Ovary (tissue), 10 donors: ENCODE measurements at regions of chr1 and their contacts with region 1.

Region 1: DNA sequence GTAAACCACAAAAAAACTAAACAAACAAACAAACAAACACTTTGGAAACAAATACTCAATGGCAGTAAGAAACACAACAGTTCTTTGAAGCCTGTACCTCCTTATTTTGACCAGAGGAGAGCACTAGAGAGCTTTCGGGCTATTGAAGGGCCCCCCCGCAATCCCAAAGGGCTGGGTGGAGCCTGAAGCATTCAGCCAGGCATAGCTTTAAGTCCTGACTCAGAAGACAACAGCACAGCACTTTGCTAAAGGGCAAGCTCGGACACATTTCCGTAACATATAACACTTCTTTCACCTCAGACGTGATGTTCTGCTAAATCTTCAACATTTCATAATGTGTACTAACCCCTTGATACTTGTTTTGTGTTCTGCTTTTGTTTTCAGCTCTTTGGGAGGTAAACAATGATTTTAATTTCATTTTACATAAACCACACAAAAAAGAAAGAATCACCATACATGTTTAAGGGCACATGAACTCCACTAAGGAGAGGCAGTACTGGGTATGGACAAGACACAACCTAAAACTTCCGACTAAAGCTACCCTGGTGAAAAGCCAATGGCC is 9.7 kb upstream of the SHCBP1L start:
- DNase-seq: peak; percentile 72 to 85 (median 75)
- H3K4me3 ChIP-seq: peak overlapping the region; percentile 21
- H3K27ac ChIP-seq: no peak overlapping the region
- H3K4me1 ChIP-seq: no peaks in the 10 kb centered on the region
- H3K27me3 ChIP-seq: no peaks in the 10 kb centered on the region
- CTCF ChIP-seq: peak; percentile 66 to 86 (median 84)
- EP300 ChIP-seq: no peak
- POLR2A ChIP-seq: peak; percentile 37

Region 2: GRCh38 chr1:183234660-183235476 is 272.2 kb after region 1 on chr1:
- intact Hi-C with region 1: loop called in 1 of 4 experiments (anchors 5 kb)
- DNase-seq: peak; percentile 71 to 85 (median 73)
- H3K4me3 ChIP-seq: peak overlapping the region; percentile 36
- H3K27ac ChIP-seq: peak overlapping the region; percentile 63 to 81
- H3K4me1 ChIP-seq: peaks cover 7% of the 10 kb centered on the region
- H3K27me3 ChIP-seq: no peaks in the 10 kb centered on the region
- CTCF ChIP-seq: peak; percentile 60 to 75 (median 68)
- EP300 ChIP-seq: no peak
- POLR2A ChIP-seq: peak; percentile 30

Region 3: GRCh38 chr1:183281553-183282091 is 319.0 kb after region 1 on chr1:
- intact Hi-C with region 1: loop called in 1 of 4 experiments (anchors 5 kb)
- DNase-seq: peak; percentile 90 to 95 (median 93)
- H3K4me3 ChIP-seq: no peak overlapping the region
- H3K27ac ChIP-seq: peak overlapping the region; percentile 22 to 32
- H3K4me1 ChIP-seq: peaks cover 7% of the 10 kb centered on the region
- H3K27me3 ChIP-seq: no peaks in the 10 kb centered on the region
- CTCF ChIP-seq: peak; percentile 84 to 98 (median 91)
- EP300 ChIP-seq: no peak
- POLR2A ChIP-seq: no peak

Region 4: DNA sequence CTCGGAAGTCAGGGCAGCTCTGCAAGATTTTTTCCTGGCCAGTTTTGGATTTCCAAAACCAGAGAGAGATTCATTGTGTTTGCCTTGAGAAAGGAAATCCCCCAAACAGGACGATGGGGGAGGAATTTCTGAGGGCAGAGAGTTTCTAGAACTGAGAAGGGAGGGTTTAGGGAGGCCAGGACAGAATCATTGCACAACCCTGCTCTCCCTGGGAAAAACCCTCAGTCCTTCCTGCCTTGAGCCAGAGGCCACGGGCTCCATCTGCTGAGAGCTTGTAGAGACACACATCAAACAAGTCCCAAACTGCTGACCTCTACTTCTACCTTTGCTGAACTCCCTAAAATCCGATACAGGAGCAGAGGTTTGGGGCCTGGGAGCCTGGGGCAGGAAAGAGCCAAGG is 355.8 kb after region 1 on chr1:
- intact Hi-C with region 1: loop called in 3 of 4 experiments (anchors 5 to 10 kb)
- DNase-seq: peak; percentile 78 to 90 (median 82)
- H3K4me3 ChIP-seq: no peak overlapping the region
- H3K27ac ChIP-seq: peak overlapping the region; percentile 49 to 58
- H3K4me1 ChIP-seq: peaks cover 3% of the 10 kb centered on the region
- H3K27me3 ChIP-seq: no peaks in the 10 kb centered on the region
- CTCF ChIP-seq: peak; percentile 61 to 69 (median 65)
- EP300 ChIP-seq: no peak
- POLR2A ChIP-seq: no peak